Activated T-helper 1 cell treated with anti-CD3 and anti-CD28 coated beads, Interleukin-12 subunit alpha, Interleukin-12 subunit beta, Interleukin-2, Interleukin-4 antibody, amounts not matched to agents 30 ng/mL and 10 ng/mL and 1 ng/mL, durations not matched to agents 14 hours and 24 hours and 36 hours (primary cell): ENCODE measurements at regions of chr12 and their contacts with region 1.

Region 1: GRCh38 chr12:7460375-7461259 is 16.7 kb upstream of the CD163L1 start:
- DNase-seq: peak; percentile 11
- H3K4me3 Mint-ChIP-seq: no peak overlapping the region
- H3K27ac Mint-ChIP-seq: no peak overlapping the region
- H3K4me1 Mint-ChIP-seq: no peaks in the 10 kb centered on the region
- H3K27me3 Mint-ChIP-seq: peaks cover 5% of the 10 kb centered on the region

Region 2: DNA sequence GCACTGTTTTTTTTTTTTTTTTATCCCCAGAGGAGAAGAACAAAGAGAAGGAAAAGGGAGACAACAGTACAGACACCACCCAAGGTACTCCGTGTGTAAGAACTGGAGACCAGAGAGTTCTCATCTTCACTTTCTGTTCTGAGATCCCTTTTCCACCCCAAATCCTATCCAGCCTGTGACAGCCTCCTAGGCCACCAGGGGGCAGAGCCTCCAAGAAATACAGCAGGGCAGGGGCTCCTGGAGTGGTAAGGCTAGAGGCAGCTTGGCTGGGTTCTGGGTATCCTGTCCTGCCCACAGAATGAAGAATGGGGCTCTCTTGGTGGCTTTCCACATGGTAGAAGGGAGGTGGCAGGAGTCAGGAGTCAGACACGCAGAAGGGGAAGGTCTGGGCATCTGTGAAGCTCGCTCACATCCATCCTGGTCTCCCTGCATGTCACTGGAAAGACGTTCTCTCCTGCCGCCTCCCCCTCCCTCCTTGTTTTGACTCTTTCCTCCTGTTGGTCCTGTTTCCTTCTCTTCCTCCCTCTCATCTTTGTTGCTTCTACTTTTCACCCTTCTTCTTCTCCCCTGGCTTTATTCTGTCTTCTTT is 318.5 kb before region 1 on chr12:
- intact Hi-C with region 1: loop called (anchors 2 kb)
- DNase-seq: peak; percentile 32
- H3K4me3 Mint-ChIP-seq: no peak overlapping the region
- H3K27ac Mint-ChIP-seq: peak overlapping the region; percentile 24
- H3K4me1 Mint-ChIP-seq: peaks cover 6% of the 10 kb centered on the region
- H3K27me3 Mint-ChIP-seq: no peaks in the 10 kb centered on the region

Region 3: DNA sequence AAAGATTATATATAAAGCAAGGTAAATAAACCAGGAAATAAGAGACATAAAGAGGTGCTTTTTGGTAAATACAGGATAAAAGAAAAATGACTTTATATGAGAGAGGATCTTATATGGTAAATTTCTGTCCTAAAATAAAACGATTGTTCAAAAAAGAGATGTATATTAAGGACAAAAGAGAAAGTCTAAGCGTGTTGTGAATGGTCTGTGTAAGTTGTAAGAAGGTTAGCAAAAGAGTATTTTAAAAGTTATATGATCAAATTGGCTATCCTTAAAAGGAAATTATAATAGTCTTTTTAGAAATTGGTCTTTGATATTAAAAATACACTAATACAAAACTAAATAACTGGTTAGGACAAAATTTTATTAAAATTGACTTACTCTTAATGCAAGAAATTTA is 170.9 kb before region 1 on chr12:
- intact Hi-C with region 1: no loop called
- DNase-seq: no peak
- H3K4me3 Mint-ChIP-seq: no peak overlapping the region
- H3K27ac Mint-ChIP-seq: no peak overlapping the region
- H3K4me1 Mint-ChIP-seq: no peaks in the 10 kb centered on the region
- H3K27me3 Mint-ChIP-seq: no peaks in the 10 kb centered on the region

Region 4: GRCh38 chr12:7374423-7375144 is 86.0 kb before region 1 on chr12:
- intact Hi-C with region 1: loop called (anchors 1 kb)
- DNase-seq: no peak
- H3K4me3 Mint-ChIP-seq: no peak overlapping the region
- H3K27ac Mint-ChIP-seq: no peak overlapping the region
- H3K4me1 Mint-ChIP-seq: no peaks in the 10 kb centered on the region
- H3K27me3 Mint-ChIP-seq: peaks cover 6% of the 10 kb centered on the region

Region 5: DNA sequence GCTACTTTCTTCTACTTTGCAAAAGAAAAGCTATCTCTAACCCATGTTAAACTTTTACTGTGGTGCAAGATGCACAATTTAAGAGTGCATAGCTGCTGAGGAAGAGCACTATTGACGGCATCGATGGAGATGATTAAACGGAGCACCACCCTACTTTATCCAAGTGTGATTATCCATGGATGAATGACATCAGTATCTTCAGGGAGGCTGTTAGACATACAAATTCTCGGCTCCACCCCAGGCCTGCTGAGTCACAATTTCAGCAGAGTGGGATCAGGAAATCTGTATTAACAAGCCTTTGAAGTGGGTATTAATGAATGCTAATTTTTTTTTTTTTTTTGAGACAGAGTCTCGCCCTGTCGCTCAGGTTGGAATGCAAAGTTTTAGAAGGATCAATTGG is 395.9 kb after region 1 on chr12:
- intact Hi-C with region 1: no loop called
- DNase-seq: no peak
- H3K4me3 Mint-ChIP-seq: no peak overlapping the region
- H3K27ac Mint-ChIP-seq: no peak overlapping the region
- H3K4me1 Mint-ChIP-seq: peaks cover 14% of the 10 kb centered on the region
- H3K27me3 Mint-ChIP-seq: peaks cover 17% of the 10 kb centered on the region